Panc1 (cell line): ENCODE measurements at regions of chr14 and their contacts with region 1.

Region 1: DNA sequence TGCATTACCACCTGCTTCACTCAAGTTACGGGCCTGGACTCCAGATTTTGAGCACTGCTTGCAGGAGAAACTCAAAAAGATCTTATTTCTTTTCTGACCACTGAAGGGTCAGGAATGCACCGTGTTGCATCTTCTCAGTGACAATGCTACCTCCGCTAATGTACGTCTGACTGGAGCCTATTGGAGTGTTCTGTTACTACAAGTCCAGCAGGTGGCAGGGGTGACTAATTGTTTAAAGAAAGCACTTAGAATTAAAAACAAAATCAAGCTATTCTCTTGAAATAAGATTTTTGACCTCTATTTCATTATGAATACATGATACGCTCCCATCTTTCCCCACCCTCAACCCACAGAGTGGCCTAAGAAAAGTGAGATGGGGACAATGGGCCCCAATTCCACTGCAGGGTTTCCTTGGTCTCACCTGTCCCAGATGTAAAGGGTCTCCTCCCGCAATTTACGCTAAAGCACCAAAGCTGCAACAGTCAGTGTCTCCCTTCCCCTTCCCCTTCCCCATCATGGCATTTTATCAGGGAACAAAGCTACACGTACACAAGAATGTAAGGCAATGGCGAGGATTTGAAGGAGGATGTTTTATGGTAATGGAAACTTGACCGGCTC is 2.2 kb downstream of the TBPL2 start:
- DNase-seq: no peak
- ATAC-seq: peak; percentile 91
- H3K4me3 ChIP-seq: no peak overlapping the region
- H3K27ac ChIP-seq: peak overlapping the region; percentile 71
- H3K4me1 ChIP-seq: peaks cover 16% of the 10 kb centered on the region
- H3K27me3 ChIP-seq: no peaks in the 10 kb centered on the region
- CTCF ChIP-seq: peak; percentile 77

Region 2: DNA sequence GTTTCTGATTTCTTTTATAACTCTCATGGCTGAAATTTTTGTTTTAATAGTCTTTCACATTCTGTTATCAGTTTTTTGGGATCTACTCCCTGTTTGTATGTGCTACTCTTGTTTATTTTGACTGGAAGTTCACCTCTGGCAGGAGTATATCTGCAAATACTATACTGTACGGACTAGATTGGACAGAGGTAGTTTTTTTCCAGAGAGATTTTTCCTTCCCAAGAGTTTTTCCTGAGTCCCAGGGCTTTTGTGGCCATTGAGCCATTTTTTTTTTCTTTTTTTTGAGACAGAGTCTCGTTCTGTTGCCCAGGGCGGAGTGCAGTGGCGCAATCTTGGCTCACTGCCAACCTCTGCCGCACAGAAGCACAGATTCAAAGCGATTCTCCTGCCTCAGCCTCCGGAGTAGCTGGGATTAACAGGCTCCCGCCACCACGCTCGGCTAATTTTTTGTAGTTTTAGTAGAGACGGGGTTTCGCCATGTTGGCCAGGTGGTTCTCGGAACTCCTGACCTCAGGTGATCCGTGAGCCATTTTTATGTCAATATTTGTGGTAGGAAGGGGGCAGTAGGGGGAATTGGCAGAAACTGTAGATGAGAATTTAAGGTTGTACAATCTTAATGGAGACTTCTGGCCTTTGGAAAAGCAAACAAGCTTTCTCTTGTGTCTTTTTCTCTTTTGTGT is 161.2 kb after region 1 on chr14:
- CTCF ChIA-PET with region 1: no interaction called
- POLR2A ChIA-PET with region 1: no interaction called
- in situ Hi-C with region 1: no loop called
- intact Hi-C with region 1: no loop called
- DNase-seq: peak; percentile 50
- ATAC-seq: peak; percentile 92
- H3K4me3 ChIP-seq: peak overlapping the region; percentile 26 to 54
- H3K27ac ChIP-seq: peak overlapping the region; percentile 92
- H3K4me1 ChIP-seq: peaks cover 67% of the 10 kb centered on the region
- H3K27me3 ChIP-seq: no peaks in the 10 kb centered on the region
- CTCF ChIP-seq: no peak

Region 3: GRCh38 chr14:56108057-56108456 is 669.9 kb after region 1 on chr14:
- CTCF ChIA-PET with region 1: interaction called, 10 read pairs
- POLR2A ChIA-PET with region 1: no interaction called
- in situ Hi-C with region 1: no loop called
- intact Hi-C with region 1: no loop called
- DNase-seq: no peak
- ATAC-seq: no peak
- H3K4me3 ChIP-seq: no peak overlapping the region
- H3K27ac ChIP-seq: no peak overlapping the region
- H3K4me1 ChIP-seq: no peaks in the 10 kb centered on the region
- H3K27me3 ChIP-seq: peaks cover 3% of the 10 kb centered on the region
- CTCF ChIP-seq: no peak